OCI-LY7 (cell line): ENCODE measurements at regions of chr2 and their contacts with region 1.

Region 1: DNA sequence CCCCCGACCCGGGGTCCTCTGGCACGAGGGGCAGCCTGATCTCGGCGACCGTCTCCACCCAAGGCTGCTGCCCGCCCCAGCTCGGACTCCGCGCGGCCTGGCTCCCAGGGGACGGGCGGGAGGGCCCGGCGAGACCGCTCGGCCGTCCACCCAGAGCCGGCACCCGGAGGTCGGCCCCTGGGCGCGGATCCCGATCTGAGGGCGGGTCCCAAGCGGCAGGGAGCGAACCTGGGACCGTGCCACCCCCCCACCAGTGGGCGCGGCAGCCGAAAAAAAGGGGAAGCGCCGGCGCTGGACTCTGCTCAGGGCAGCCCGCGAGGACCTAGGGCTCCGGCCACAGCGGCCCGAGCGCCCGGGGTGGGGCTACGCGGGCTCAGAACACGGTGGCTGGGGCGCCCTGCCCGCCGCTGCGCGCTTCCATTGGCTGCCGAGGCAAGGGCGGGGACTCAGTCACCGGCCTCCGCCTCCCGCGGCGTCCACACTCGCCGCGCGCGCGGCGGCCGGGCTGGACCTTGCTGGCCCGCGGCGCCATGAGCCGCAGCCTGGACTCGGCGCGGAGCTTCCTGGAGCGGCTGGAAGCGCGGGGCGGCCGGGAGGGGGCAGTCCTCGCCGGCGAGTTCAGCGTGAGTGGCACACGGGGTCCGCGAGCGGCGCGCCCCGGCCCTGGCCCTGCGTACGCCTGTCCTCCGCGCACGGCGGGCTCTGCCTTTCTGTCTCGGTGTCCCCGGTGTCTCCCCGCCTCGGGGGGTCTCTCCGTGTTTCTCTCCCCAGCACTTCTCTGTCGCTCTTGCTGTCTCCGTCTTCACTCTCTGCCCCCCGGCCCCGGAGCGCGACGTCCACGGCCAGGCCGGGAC is at the start of gene PTPN18:
- DNase-seq: peak; percentile 68
- H3K4me3 ChIP-seq: peak within 1 kb of the TSS; percentile 75
- H3K27ac ChIP-seq: peak within 1 kb of the TSS; percentile 97
- H3K4me1 ChIP-seq: peaks cover 50% of the 10 kb centered on the region
- CTCF ChIP-seq: peak; percentile 54
- total RNA-seq, gene PTPN18: 96.6 and 107 TPM in 2 replicates

Region 2: DNA sequence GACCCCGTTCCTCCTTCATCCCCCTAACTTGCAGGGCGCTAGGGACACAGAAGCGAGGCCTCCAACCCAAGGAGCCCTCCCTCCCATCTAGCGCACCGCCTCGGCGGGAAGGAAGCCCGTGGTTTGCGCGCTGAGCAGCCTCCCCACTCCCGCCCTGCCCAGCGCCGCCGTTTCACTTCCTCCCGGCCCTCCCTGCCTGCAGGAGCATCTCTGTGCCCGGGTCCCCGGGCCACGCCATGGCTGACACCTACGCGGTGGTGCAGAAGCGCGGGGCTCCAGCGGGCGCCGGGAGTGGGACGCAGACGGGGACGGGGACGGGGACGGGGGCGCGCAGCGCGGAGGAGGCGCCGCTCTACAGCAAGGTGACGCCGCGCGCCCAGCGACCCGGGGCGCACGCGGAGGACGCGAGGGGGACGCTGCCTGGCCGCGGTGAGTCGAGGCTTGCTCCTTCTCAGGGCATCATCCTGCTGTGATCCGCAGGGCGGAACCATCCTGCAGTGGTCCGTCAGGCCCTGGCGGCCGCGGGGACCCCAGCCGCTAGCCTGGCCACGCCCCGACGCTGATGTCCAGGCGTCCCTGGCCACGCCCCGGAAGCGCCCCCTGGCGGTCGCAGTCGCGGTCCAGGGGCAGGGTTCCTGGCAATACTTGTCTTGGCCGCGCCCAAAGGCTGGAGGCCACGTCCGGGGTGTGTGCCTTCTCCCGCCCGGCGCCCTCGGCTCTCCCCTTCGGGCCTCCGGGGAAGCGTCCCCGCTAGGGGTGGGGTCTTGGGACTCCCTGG is 16.4 kb after region 1 on chr2:
- CTCF ChIA-PET with region 1: interaction called, 6 read pairs
- POLR2A ChIA-PET with region 1: interaction called, 251 read pairs
- intact Hi-C with region 1: loop called (anchors 1 kb)
- DNase-seq: peak; percentile 89
- H3K4me3 ChIP-seq: peak overlapping the region; percentile 93
- H3K27ac ChIP-seq: peak overlapping the region; percentile 90
- H3K4me1 ChIP-seq: peaks cover 70% of the 10 kb centered on the region
- CTCF ChIP-seq: peak; percentile 81

Region 3: DNA sequence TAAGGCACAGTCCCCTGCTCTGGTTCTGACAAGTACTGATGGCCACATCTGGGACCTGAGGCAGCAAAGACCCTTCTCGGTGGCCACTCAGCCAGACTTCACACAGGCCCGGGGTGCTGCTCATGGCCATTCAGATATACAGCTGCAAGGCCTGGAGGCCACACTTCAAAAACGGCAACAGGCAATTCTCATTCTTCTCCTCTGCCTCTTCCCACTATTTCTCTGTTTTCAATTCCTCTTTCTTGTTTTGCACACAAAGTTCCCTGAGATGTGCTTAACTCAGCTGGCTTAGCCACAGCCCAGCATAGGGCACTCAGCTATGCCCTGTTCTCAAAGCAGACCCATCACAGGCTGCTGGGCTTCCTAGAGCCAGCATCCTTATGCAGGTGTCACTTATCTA is 29.9 kb after region 1 on chr2:
- CTCF ChIA-PET with region 1: interaction called, 4 read pairs
- POLR2A ChIA-PET with region 1: interaction called, 159 read pairs
- intact Hi-C with region 1: loop called (anchors 2 kb)
- DNase-seq: peak; percentile 84
- H3K4me3 ChIP-seq: peak overlapping the region; percentile 21
- H3K27ac ChIP-seq: peak overlapping the region; percentile 100
- H3K4me1 ChIP-seq: peaks cover 90% of the 10 kb centered on the region
- CTCF ChIP-seq: no peak

Region 4: DNA sequence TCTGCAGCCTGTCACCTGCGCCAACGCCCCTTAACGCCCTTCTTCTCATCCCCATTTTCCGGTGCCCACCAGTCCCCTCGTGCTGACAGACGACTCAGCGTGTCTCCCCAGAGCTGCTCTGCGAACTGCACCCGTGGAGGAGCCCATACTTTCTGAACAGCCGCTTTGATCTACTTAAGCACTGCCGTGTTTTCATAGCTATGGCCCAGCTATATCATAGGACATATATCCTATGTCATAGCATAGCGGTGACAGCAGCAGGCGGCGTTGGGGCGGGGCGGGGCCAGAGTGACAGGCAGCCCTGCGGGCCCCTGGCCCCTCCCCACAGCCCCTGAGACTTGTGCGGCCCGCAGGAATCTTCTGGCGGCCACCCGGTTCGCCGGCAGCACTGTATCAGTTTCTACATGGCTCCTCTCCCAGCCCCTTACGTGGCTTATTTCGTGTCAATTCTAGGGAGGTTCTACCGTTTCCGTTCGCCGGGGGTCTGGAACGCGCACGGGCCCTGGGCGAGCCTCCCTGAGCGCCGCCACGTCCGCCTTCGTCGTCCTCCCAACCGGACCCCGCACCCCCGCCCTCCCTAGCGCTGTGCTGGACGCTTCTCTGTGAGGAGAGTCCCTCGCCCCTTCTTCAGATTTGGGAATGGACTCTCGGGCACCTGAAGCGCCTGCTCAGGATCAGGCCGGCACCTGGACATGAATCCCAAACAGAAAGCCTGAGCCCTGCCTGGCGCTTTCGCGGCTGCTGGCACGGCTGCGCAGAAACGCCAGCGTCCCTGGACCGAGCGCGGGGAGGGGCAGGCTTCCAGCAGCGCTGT is 35.5 kb after region 1 on chr2:
- CTCF ChIA-PET with region 1: interaction called, 4 read pairs
- POLR2A ChIA-PET with region 1: interaction called, 159 read pairs
- intact Hi-C with region 1: loop called (anchors 2 kb)
- DNase-seq: peak; percentile 76
- H3K4me3 ChIP-seq: peak overlapping the region; percentile 61
- H3K27ac ChIP-seq: peak overlapping the region; percentile 100
- H3K4me1 ChIP-seq: peaks cover 73% of the 10 kb centered on the region
- CTCF ChIP-seq: no peak

Region 5: DNA sequence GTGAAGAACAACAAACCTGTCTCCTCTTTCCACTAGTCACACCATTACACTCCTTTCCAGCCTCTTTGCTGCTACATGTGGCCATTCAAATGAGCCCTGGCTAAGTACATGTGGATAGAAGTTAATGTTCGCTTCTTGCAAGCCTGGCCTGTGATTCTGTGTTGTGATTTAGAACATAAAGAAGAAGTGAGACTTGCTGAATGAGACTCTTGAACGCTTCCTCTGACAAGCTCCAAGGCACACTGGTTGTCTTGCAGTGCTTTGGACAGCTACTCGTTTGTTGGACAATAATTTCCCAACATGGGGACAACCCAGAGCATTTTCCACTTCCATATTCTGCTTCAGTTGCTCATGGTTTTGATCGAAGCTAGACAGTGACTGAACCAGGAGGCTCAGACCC is 1229.1 kb after region 1 on chr2:
- CTCF ChIA-PET with region 1: no interaction called
- POLR2A ChIA-PET with region 1: no interaction called
- intact Hi-C with region 1: loop called (anchors 10 kb)
- DNase-seq: peak; percentile 91
- H3K4me3 ChIP-seq: peak overlapping the region; percentile 21
- H3K27ac ChIP-seq: peak overlapping the region; percentile 87
- H3K4me1 ChIP-seq: peaks cover 100% of the 10 kb centered on the region
- CTCF ChIP-seq: no peak